GM18951 (cell line): ENCODE measurements at regions of chr17 and their contacts with region 1.

Region 1: DNA sequence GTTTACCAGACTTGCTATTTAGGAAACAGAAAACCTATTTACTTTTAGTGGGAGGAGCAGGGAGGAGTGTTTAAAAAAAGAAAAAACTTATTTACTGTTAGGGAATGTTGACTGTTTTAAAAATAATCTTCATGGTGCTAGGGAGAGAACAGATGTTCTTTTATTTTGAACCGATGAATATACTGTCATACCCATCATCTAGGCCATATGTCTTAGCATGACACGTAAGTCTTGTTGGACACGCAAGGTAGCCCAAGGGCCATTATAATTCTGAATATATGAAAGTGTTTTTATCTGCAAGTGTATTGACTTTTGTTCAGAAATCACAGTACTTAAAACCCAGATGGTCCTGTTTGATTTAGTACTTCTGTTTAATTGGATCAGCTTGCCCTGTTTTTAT is 11.6 kb downstream of the WIPF2 start:
- POLR2A ChIP-seq: no peak

Region 2: DNA sequence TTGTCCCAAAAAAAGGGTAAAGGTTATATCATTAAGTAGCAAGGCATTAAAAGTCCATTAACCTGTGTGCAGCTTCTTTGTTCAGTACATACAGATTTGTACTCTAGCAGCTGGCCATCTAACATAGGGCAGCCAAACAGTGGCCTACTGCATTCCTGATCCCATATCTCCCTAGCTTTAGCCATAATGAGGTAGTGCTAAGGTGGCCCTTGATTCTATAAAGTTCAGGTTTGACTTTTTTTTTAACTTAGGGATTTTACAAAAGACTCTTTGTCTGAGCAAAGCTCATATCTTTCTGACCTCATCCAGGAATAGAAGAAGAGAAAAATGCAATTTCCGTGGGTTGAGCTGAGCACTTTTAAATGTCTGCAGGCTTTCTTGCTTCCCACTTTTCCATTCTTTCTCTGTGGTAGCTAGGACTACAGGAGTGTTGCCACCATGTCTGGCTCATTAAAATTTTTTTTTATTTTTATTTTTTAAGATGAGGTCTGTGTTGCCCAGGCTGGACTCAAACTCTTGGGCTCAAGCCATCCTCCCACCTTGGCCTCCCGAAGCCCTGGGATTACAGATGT is 37.6 kb after region 1 on chr17:
- in situ Hi-C with region 1: loop called (anchors 5 kb)
- POLR2A ChIP-seq: no peak

Region 3: DNA sequence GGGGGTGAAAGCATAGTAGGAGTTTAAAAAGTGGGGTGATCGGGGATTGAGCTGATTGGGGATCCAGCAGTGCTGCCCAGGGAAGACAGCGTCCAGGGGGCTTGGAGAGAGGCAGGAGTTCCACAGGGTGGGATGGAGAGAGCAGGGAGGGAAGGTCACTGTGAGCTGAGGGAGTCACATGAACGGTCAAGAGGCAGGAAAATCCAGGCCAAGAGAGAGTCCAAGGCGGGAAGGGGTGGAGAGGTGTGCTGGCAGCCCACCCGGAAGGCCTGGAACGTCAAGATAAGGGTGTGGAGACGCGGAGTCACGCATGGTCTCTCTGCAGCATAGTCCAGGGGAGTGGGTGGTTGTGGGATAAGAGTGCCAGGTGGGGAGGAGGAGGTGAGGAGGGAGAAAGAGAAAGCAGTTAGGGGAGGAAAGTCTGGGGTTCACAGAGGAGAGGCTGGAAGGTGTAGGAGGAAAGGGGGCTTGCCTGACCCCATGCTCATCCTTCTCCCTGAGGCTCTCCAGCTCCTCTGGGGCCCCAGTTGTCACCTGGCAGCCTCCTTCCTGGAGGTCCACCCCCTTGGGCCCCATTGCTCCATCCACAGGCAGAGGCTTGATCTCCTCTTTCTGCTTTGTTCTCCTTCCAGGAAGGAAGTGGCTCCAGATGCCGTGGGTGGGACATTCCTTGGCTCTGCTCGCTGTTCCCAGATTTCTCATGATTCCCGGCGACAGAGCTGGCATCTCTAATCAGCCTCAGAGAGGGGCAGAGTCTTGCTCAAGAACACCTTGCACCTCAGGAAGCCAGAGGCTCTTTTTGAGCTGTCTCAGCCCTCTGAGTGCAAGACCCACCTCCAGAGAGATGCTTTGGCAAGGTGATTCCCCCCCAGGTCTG is 305.9 kb after region 1 on chr17:
- in situ Hi-C with region 1: no loop called
- POLR2A ChIP-seq: no peak